Activated CD8-positive, alpha-beta T cell treated with anti-CD3 and anti-CD28 coated beads for 36 hours (primary cell): ENCODE measurements at regions of chr16 and their contacts with region 1.

Region 1: GRCh38 chr16:30429678-30430427 is at the start of gene DCTPP1:
- DNase-seq: peak; percentile 98
- ATAC-seq: peak; percentile 97
- H3K4me3 Mint-ChIP-seq: no peak within 1 kb of the TSS
- H3K27ac Mint-ChIP-seq: no peak within 1 kb of the TSS
- H3K4me1 Mint-ChIP-seq: peaks cover 34% of the 10 kb centered on the region
- H3K27me3 Mint-ChIP-seq: no peaks in the 10 kb centered on the region
- CTCF ChIP-seq: peak; percentile 69
- total RNA-seq, gene DCTPP1: 98.4 to 105 TPM

Region 2: DNA sequence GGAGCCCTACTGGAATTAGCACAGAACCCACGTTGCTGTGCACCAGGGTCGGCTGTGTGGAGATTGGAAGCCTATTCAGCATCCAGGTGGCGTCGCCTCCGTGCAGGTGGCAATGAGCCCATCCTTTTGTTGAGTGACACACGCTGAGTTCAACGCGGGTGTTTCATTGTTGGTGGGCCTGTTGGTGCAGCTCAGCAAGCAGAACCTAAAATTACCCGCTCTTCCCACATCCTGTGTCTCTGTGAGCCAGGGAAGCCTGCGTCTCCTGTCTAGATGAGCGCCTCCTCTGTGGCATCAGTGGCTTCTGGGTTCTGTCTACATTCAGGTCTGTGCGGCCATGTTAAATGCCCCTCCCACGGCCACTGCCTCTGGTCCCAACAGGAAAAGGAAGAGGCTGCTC is 89.2 kb before region 1 on chr16:
- CTCF ChIA-PET with region 1: no interaction called
- POLR2A ChIA-PET with region 1: no interaction called
- intact Hi-C with region 1: no loop called
- DNase-seq: peak; percentile 29
- ATAC-seq: peak; percentile 35
- H3K4me3 Mint-ChIP-seq: no peak overlapping the region
- H3K27ac Mint-ChIP-seq: peak overlapping the region; percentile 49
- H3K4me1 Mint-ChIP-seq: peaks cover 17% of the 10 kb centered on the region
- H3K27me3 Mint-ChIP-seq: no peaks in the 10 kb centered on the region
- CTCF ChIP-seq: no peak

Region 3: GRCh38 chr16:30351586-30352336 is 78.1 kb before region 1 on chr16:
- CTCF ChIA-PET with region 1: no interaction called
- POLR2A ChIA-PET with region 1: no interaction called
- intact Hi-C with region 1: no loop called
- DNase-seq: no peak
- ATAC-seq: no peak
- H3K4me3 Mint-ChIP-seq: no peak overlapping the region
- H3K27ac Mint-ChIP-seq: peak overlapping the region; percentile 81
- H3K4me1 Mint-ChIP-seq: peaks cover 56% of the 10 kb centered on the region
- H3K27me3 Mint-ChIP-seq: no peaks in the 10 kb centered on the region
- CTCF ChIP-seq: no peak

Region 4: GRCh38 chr16:30417529-30418349 is 12.1 kb before region 1 on chr16:
- CTCF ChIA-PET with region 1: interaction called, 22 read pairs
- POLR2A ChIA-PET with region 1: interaction called, 13 read pairs
- intact Hi-C with region 1: no loop called
- DNase-seq: peak; percentile 89
- ATAC-seq: peak; percentile 90
- H3K4me3 Mint-ChIP-seq: peak overlapping the region; percentile 58
- H3K27ac Mint-ChIP-seq: no peak overlapping the region
- H3K4me1 Mint-ChIP-seq: peaks cover 30% of the 10 kb centered on the region
- H3K27me3 Mint-ChIP-seq: no peaks in the 10 kb centered on the region
- CTCF ChIP-seq: no peak

Region 5: DNA sequence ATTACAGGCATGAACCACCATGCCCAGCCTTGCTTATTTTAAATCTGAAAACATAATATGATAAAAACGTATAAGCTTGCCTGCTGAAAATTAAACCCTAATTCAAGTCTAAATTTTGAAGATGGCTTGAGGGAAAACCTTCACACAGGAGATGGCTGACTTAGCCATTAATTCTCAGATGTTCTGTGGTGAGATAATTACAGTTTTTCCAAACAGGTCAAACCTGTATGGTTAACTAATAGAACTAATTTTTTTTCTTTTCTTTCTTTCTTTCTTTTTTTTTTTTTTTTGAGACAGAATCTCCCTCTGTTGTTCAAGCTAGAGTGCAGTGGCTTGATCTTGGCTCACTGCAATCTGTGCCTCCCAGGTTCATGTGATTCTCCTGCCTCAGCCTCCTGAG is 36.9 kb after region 1 on chr16:
- CTCF ChIA-PET with region 1: interaction called, 31 read pairs
- POLR2A ChIA-PET with region 1: interaction called, 21 read pairs
- intact Hi-C with region 1: loop called (anchors 5 kb)
- DNase-seq: no peak
- ATAC-seq: no peak
- H3K4me3 Mint-ChIP-seq: no peak overlapping the region
- H3K27ac Mint-ChIP-seq: peak overlapping the region; percentile 79
- H3K4me1 Mint-ChIP-seq: peaks cover 50% of the 10 kb centered on the region
- H3K27me3 Mint-ChIP-seq: no peaks in the 10 kb centered on the region
- CTCF ChIP-seq: no peak

Region 6: GRCh38 chr16:30482366-30482765 is 52.5 kb after region 1 on chr16:
- CTCF ChIA-PET with region 1: interaction called, 19 read pairs
- POLR2A ChIA-PET with region 1: interaction called, 3 read pairs
- intact Hi-C with region 1: no loop called
- DNase-seq: peak; percentile 35
- ATAC-seq: peak; percentile 76
- H3K4me3 Mint-ChIP-seq: no peak overlapping the region
- H3K27ac Mint-ChIP-seq: peak overlapping the region; percentile 75
- H3K4me1 Mint-ChIP-seq: peaks cover 48% of the 10 kb centered on the region
- H3K27me3 Mint-ChIP-seq: no peaks in the 10 kb centered on the region
- CTCF ChIP-seq: peak; percentile 32

Region 7: DNA sequence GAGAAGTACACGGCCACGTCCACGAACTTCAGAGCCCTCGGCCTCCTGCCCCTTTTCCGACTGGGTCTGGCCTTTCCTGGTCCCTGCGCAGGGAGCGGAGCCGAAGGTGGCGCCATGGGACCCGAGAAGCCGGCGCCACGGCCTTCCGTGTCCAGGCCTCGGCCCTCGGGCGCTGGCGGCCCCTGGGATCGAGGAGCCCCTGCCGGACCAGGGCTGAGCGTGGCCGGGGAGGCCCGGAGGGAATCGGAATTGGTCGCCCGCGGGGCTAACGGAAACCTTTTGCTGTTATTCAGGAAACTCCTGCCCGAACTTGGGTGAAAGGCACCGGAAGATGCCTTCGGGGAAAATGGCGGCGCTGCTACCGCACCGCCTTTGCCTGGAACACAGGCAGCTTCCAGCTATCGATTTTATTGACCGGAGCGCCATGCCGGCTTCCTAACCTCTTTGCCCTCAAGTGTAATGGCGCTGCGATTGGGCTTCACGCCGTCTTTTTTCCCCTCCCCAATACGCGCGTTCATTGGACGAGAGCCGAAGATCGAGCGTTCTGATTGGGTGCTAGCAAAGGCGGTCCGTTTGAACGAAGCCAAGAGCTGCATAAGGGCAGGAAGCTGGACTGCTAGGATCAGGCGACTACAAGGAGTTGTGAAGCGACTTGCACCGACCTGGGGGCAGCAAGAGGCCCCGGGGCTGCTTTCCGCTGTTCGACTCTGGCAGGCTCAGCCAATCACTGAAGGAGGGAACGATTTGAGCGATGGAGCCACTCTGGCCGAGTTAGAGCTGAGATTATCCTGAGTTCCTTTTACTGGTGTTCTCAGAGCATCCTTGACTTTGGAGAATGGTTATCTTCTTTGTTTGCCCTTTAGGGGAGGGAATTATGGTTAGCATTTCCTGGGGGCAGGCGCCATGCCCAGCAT is 180.3 kb after region 1 on chr16 and contains the start of gene ZNF689:
- CTCF ChIA-PET with region 1: interaction called, 25 read pairs
- POLR2A ChIA-PET with region 1: interaction called, 10 read pairs
- intact Hi-C with region 1: no loop called
- DNase-seq: peak; percentile 96
- ATAC-seq: peak; percentile 86
- H3K4me3 Mint-ChIP-seq: peak within 1 kb of the TSS; percentile 89
- H3K27ac Mint-ChIP-seq: peak within 1 kb of the TSS; percentile 93
- H3K4me1 Mint-ChIP-seq: peaks cover 15% of the 10 kb centered on the region
- H3K27me3 Mint-ChIP-seq: no peaks in the 10 kb centered on the region
- CTCF ChIP-seq: no peak
- total RNA-seq, gene ZNF689: 9.8 to 11.3 TPM

Region 8: DNA sequence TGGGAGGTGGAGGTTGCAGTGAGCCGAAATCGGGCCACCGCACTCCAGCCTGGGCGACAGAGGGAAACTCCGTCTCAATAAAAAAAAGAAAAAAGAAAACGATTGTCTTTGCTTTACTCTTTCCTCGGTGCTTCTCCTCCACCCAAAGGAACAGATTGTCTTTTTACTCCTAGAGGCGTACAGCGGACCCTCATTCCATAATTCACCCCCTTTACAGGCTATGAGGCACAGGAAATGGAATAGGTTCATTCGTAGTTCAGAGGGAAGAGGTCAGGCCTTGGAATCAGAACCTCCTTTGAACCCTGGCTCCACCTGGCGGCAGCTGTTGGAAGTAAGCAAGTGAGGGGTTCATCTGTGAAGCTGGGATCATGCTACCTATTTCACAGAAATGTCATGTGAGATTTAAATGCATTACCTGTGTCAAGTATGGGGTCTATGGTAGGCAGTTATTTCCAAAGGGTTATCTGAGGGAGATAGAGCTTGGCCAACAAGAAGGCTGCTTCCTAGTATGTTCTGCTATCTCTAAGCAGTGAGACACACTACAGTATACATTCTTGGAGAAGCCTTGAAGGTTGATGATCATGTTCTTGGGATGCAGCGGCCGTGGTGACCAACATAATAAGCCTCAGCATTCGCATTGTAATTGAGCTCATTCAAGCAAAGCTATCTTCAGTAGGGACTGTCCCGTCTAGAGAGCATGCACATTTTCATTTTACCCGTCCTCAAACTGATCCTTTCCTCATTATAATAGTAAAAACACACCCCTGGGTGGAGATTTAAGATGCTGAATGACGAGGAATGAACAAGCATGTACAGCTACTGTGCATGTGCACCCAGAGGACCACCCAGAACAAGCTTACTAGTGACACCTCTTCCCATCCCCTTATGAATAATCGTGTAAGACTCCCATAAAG is 199.0 kb after region 1 on chr16:
- CTCF ChIA-PET with region 1: interaction called, 10 read pairs
- POLR2A ChIA-PET with region 1: no interaction called
- intact Hi-C with region 1: no loop called
- DNase-seq: peak; percentile 95
- ATAC-seq: peak; percentile 97
- H3K4me3 Mint-ChIP-seq: peak overlapping the region; percentile 57
- H3K27ac Mint-ChIP-seq: peak overlapping the region; percentile 72
- H3K4me1 Mint-ChIP-seq: peaks cover 4% of the 10 kb centered on the region
- H3K27me3 Mint-ChIP-seq: no peaks in the 10 kb centered on the region
- CTCF ChIP-seq: peak; percentile 88